ENCODE measurements at regions of chr2 and their contacts with region 1.

Region 1: GRCh38 chr2:168490015-168490874 is 34.2 kb downstream of the CERS6 start:
- DNase-seq: peak; percentile 78
- ATAC-seq: peak; percentile 92
- H3K4me3 Mint-ChIP-seq: peak overlapping the region; percentile 61
- H3K27ac Mint-ChIP-seq: peak overlapping the region; percentile 88
- H3K4me1 Mint-ChIP-seq: peaks cover 50% of the 10 kb centered on the region
- H3K27me3 Mint-ChIP-seq: peaks cover 7% of the 10 kb centered on the region

Region 2: DNA sequence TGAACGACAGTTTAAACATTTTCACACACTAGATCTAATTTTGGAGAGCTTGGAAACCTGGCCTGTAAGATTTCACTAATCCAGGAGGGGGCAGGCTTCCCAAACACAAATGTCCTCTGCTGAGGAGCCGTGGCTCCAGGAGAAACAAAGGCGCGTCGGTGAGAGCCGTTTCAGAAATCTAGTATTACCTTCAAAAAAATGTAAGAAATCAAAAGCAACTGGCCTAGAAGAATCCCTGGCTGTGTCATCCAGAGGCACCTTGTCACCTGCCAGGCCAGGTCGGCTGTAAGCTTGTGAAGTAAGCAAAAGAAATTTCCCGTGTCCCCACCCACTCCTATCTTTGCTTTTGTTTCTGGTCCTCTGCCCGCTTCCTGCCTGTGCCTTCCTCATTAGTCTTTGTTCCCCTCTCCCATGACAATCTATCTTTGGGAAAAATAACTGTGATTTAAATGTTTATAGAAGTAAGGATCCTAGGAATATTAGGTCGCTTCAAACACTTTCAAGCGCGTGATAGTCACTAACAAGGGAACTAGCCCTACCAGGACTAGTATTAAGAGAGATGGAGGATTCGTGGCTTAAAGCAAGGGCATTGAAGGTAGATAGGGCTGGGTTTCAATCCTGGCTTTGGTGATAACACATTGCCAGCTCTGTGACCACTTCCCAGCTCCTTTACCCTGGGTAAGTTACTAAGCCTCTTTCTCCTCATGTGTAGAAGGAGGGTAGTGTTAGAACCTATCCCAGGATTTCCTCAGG is 143.3 kb before region 1 on chr2:
- CTCF ChIA-PET with region 1: no interaction called
- POLR2A ChIA-PET with region 1: no interaction called
- intact Hi-C with region 1: loop called in 1 of 2 experiments (anchors 5 kb)
- DNase-seq: peak; percentile 80
- ATAC-seq: peak; percentile 85
- H3K4me3 Mint-ChIP-seq: peak overlapping the region; percentile 67
- H3K27ac Mint-ChIP-seq: peak overlapping the region; percentile 20
- H3K4me1 Mint-ChIP-seq: peaks cover 5% of the 10 kb centered on the region
- H3K27me3 Mint-ChIP-seq: no peaks in the 10 kb centered on the region

Region 3: GRCh38 chr2:168455648-168456520 is 34.4 kb before region 1 on chr2 and contains the start of gene CERS6:
- CTCF ChIA-PET with region 1: no interaction called
- POLR2A ChIA-PET with region 1: interaction called, 3 read pairs
- intact Hi-C with region 1: loop called (anchors 1 to 2 kb)
- DNase-seq: peak; percentile 95
- ATAC-seq: peak; percentile 92
- H3K4me3 Mint-ChIP-seq: no peak within 1 kb of the TSS
- H3K27ac Mint-ChIP-seq: peak within 1 kb of the TSS; percentile 87
- H3K4me1 Mint-ChIP-seq: peaks cover 38% of the 10 kb centered on the region
- H3K27me3 Mint-ChIP-seq: peaks cover 2% of the 10 kb centered on the region
- total RNA-seq, gene CERS6: 12.9 to 13.1 TPM

Region 4: GRCh38 chr2:168543037-168543436 is 52.8 kb after region 1 on chr2:
- CTCF ChIA-PET with region 1: no interaction called
- POLR2A ChIA-PET with region 1: no interaction called
- intact Hi-C with region 1: no loop called
- DNase-seq: no peak
- ATAC-seq: no peak
- H3K4me3 Mint-ChIP-seq: no peak overlapping the region
- H3K27ac Mint-ChIP-seq: no peak overlapping the region
- H3K4me1 Mint-ChIP-seq: peaks cover 50% of the 10 kb centered on the region
- H3K27me3 Mint-ChIP-seq: no peaks in the 10 kb centered on the region

Region 5: GRCh38 chr2:168603439-168603961 is 113.3 kb after region 1 on chr2:
- CTCF ChIA-PET with region 1: no interaction called
- POLR2A ChIA-PET with region 1: no interaction called
- intact Hi-C with region 1: no loop called
- DNase-seq: no peak
- ATAC-seq: no peak
- H3K4me3 Mint-ChIP-seq: no peak overlapping the region
- H3K27ac Mint-ChIP-seq: no peak overlapping the region
- H3K4me1 Mint-ChIP-seq: peaks cover 19% of the 10 kb centered on the region
- H3K27me3 Mint-ChIP-seq: no peaks in the 10 kb centered on the region

Region 6: DNA sequence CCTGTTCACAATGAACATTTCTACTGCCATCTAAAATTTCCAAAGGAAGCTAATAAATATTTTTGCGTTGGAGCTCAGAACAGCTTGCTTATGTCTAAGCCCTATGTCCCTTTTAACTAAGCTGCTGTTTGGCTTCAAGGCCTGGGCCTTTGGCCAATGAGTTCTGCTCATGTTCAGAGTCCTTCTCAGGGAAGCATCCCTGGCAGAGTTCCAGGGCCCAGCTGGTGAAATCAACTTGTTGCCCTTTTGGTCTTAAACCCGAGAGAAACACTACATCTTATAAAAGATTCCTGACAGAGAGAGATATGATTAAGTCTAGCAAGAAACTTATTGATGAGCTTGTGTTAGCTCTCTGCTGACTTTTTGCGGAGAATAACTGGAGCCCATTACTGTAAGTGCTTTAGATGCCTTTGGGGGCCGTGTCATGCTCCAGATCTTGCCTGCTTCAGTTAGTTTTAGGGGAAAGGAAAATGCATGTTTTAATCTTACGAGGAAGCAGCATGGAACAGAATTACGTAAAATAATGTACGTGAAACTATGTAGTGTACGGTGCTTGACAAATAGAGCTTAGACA is 209.7 kb after region 1 on chr2:
- CTCF ChIA-PET with region 1: no interaction called
- POLR2A ChIA-PET with region 1: no interaction called
- intact Hi-C with region 1: loop called in 1 of 2 experiments (anchors 10 kb)
- DNase-seq: no peak
- ATAC-seq: no peak
- H3K4me3 Mint-ChIP-seq: no peak overlapping the region
- H3K27ac Mint-ChIP-seq: no peak overlapping the region
- H3K4me1 Mint-ChIP-seq: no peaks in the 10 kb centered on the region
- H3K27me3 Mint-ChIP-seq: no peaks in the 10 kb centered on the region

Region 7: GRCh38 chr2:169069341-169069740 is 579.1 kb after region 1 on chr2 and contains the start of gene DHRS9:
- CTCF ChIA-PET with region 1: no interaction called
- POLR2A ChIA-PET with region 1: no interaction called
- intact Hi-C with region 1: loop called in 1 of 2 experiments (anchors 5 kb)
- DNase-seq: peak; percentile 67
- ATAC-seq: peak; percentile 88
- H3K4me3 Mint-ChIP-seq: peak within 1 kb of the TSS; percentile 69
- H3K27ac Mint-ChIP-seq: peak within 1 kb of the TSS; percentile 70
- H3K4me1 Mint-ChIP-seq: peaks cover 42% of the 10 kb centered on the region
- H3K27me3 Mint-ChIP-seq: no peaks in the 10 kb centered on the region
- total RNA-seq, gene DHRS9: 4.1 to 4.8 TPM

Region 8: GRCh38 chr2:169285531-169286235 is 795.4 kb after region 1 on chr2:
- CTCF ChIA-PET with region 1: no interaction called
- POLR2A ChIA-PET with region 1: no interaction called
- intact Hi-C with region 1: no loop called
- DNase-seq: no peak
- ATAC-seq: no peak
- H3K4me3 Mint-ChIP-seq: no peak overlapping the region
- H3K27ac Mint-ChIP-seq: no peak overlapping the region
- H3K4me1 Mint-ChIP-seq: no peaks in the 10 kb centered on the region
- H3K27me3 Mint-ChIP-seq: peaks cover 11% of the 10 kb centered on the region

Measured in activated CD4-positive, alpha-beta T cell treated with anti-CD3 and anti-CD28 coated beads for 36 hours (primary cell).